Right ventricle myocardium superior (tissue), 1 donor: ENCODE measurements at regions of chr6 and their contacts with region 1.

Region 1: DNA sequence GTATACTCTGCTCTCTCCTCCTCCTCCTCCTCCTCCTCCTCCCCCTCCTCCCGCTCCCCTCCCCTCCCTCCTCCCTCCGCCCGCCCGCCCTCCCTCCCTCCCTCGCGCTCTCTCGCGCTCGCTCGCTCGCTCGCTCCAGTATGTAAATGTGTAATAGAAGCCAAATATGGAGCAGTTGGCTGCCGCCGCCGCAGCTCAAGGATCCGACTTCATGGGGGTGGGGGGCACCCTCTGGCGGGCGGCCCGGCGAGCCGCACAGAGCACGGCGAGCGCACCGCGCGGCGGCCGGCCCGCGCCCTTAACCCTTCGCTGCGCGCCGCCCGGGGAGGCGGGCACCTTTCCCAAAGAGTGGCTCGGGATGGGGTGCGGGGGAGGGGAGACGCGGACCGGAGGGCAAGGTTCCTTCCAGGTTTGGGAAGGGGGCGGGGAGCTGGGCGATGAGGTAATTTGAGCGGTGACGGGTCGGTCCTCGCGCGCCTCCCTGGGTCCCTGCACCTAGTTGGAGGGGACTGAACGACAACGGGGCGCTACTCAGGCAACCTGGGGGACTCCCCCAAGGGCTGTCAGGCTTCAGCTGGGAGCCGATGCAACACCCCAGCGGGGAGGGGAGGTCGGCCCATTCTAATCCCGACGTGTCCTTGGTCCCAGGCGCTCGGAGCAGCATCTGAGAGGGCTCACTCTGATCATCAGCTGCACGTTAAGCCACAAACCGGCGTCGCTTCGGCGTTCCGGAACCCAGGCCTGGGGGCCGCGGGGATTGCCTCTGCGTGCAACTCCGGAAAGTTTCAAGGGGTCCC is 409 bp upstream of the ATXN1 start:
- DNase-seq: peak; percentile 93
- ATAC-seq: peak; percentile 61

Region 2: GRCh38 chr6:16332175-16332542 is 429.5 kb before region 1 on chr6:
- intact Hi-C with region 1: loop called (anchors 10 kb)
- DNase-seq: peak; percentile 77
- ATAC-seq: peak; percentile 92

Region 3: DNA sequence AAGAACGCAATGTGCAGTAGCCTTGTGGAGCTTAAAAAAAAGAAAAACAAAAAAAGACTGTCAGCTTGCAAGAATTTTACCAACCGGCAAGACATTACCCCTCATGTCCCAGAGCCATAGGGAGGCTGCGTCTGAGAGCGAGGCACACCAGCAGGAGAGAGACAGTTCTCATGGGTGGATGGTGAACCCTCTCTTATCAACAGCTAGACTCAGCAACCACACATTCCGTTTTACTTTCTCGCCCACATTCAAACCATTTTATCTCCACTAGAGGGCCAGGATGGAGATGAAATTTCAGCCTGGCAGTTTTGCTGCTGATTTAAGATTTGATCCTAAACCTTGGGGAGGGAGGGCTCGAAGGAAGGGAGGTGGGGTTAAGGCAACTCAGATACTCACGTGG is 247.4 kb before region 1 on chr6:
- intact Hi-C with region 1: loop called (anchors 5 kb)
- DNase-seq: no peak
- ATAC-seq: peak; percentile 51

Region 4: DNA sequence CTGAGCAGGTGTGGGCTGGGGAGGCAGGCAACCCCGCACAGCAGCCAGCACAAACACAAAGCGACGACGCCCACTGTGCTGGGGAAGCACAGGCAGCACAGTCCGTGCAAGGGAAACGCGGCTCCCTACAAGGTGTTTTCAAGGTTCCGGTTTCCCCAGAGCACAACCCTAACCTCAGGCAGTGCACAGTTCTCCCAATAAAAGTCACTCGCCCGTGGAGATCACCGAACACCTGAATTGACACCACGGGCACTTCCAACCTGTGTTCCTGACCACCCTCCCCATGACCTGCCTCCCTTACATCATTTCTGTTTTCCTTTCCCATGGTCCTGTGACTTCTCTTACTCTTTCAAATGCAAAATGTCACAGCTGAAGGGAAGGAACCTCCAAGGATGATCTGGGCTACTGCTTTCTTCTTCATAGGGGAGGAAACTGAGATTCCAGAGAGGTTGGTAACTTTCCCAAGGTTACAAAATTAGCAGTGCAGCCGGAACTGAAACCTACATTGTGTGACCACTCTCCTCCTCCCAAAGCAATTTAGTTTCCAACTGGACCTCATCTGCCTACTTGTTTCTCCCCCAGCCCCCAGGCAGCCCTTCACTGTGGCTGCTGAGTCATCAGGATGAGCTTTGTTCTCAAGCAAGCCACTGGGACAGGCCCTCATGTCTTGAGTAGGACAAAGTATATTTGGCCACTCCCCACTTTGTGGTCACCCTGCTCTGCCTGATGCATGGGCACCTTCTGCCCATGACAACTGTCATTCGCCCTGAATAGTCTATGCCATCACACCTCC is 125.7 kb before region 1 on chr6:
- intact Hi-C with region 1: no loop called
- DNase-seq: no peak
- ATAC-seq: no peak

Region 5: GRCh38 chr6:17086469-17086868 is 324.8 kb after region 1 on chr6:
- intact Hi-C with region 1: loop called (anchors 10 kb)
- DNase-seq: no peak
- ATAC-seq: peak; percentile 81